ENCODE measurements at regions of chr4 and their contacts with region 1.

Region 1: GRCh38 chr4:68271851-68272756 is 26.6 kb upstream of the TMPRSS11B start:
- DNase-seq: no peak

Region 2: GRCh38 chr4:68299492-68300457 is 27.7 kb after region 1 on chr4:
- intact Hi-C with region 1: no loop called
- DNase-seq: no peak

Region 3: GRCh38 chr4:68375667-68376559 is 103.8 kb after region 1 on chr4:
- intact Hi-C with region 1: loop called (anchors 5 kb)
- DNase-seq: no peak

Region 4: GRCh38 chr4:68416591-68416990 is 144.5 kb after region 1 on chr4:
- intact Hi-C with region 1: no loop called
- DNase-seq: no peak